GM13977 (cell line): ENCODE measurements at regions of chr4 and their contacts with region 1.

Region 1: GRCh38 chr4:186021461-186022167 is 47.3 kb upstream of the TLR3 start:
- DNase-seq: peak; percentile 55
- CTCF ChIP-seq: peak; percentile 69

Region 2: GRCh38 chr4:185039508-185040273 is 981.9 kb before region 1 on chr4:
- in situ Hi-C with region 1: loop called (anchors 25 kb)
- DNase-seq: peak; percentile 76
- CTCF ChIP-seq: peak; percentile 75

Region 3: DNA sequence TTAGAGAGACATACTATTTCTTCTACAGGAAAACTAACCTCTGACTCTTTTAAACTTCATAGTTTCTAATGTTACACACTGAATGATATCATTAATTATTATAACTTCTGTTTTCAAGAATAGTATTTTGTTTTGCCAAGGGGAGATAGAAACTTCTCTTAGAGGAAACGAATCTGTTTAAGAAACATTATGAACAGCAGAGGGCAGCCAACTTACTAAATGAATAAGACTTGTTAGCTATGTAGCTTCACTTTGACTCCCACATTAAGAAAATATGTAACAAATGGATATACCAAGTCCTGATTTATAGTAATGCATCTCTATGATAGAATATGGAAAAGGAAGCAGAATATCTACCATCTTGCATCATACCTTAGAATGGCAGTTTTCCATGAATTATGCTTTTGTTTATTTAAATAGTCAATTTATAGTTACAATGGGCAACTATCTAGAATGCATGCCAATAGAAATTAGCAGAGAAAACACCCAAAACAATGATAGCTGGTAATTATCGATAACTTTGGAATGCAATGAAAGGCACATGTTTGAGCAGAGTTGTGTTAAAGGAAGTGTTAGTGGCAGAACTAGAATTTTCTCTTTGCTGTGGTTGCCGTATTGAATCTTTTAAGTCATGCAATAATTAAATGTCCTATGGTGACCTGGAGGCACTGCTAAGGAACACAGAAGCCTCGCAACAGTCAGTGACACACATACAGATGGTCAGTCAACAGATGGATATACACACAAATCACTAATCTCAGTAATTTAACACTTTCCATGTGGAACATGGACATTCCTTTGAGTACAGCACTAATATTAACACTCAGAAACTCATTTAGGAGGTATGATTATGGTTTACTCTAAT is 380.6 kb before region 1 on chr4:
- in situ Hi-C with region 1: loop called (anchors 10 kb)
- DNase-seq: peak; percentile 69
- CTCF ChIP-seq: peak; percentile 31

Region 4: DNA sequence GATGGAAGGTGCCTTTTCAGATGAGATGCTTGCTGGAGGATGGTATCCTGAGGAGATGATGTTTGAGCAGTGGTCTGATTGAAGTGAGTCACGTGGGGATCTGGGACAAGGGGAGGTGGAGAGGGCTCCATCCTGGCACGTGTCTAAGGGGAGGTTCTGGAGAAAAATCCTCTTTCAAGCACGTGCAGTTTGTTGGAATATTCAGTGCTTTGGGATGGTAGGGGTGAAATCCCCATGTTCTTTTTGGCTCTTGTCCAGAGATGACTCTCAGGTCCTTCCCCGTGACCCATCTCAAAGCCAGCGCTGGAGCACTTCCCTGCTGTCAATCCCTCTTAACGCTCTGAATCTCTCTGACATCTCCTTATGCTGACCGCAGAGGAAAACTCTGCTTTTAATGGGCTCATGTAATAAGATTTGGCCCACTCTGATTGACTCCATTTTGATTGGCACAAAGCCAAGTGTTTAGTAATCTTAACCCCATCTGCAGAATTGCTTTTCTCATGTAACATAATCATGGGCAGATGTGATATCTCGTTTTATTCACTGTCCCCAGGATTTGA is 194.9 kb after region 1 on chr4:
- in situ Hi-C with region 1: no loop called
- DNase-seq: no peak
- CTCF ChIP-seq: no peak